GM18951 (cell line): ENCODE measurements at regions of chr7 and their contacts with region 1.

Region 1: GRCh38 chr7:5854738-5855137 is 25.9 kb upstream of the OCM start:
- POLR2A ChIP-seq: no peak

Region 2: DNA sequence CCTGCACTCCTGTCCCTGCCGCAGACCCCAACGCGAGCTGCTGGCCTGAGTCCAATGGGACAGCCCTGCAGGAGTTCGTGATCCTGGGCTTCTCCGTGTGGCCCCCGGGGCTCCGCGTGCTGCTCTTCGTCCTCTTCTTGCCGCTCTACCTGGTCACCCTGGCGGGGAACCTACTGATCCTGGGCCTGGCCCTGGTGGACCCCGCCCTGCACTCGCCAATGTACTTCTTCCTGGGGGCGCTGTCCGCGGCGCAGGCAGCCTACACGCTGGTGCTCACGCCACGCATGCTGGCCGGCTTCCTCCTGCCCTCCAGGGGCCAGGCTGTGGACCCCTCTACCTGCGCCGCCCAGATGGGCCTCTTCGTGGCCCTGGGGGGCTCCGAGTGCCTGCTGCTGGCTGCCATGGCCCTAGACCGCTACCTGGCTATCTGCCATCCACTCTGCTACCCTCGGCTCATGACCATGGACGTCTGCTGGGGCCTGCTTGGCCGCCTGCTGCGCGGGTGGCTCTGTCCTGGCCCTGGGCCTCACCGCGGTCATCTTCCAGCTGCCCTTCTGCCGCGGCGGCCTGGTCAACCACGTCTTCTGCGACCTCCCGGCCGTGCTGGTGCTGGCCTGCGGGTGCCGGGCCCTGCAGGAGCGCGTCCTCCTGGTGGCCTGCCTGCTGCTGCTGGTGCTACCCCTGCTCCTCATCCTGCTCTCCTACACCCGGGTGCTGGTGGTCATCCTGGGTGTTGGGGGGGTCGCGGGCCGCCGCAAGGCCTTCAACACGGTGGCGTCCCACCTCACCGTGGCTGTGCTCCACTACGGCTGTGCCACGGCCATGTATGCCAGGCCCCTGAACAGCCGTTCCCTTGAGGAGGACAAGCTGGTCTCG is 737.4 kb before region 1 on chr7:
- in situ Hi-C with region 1: loop called (anchors 10 kb)
- POLR2A ChIP-seq: no peak

Region 3: GRCh38 chr7:5743803-5744202 is 110.9 kb before region 1 on chr7:
- in situ Hi-C with region 1: no loop called
- POLR2A ChIP-seq: no peak